ENCODE measurements at regions of chrX and their contacts with region 1.

Region 1: DNA sequence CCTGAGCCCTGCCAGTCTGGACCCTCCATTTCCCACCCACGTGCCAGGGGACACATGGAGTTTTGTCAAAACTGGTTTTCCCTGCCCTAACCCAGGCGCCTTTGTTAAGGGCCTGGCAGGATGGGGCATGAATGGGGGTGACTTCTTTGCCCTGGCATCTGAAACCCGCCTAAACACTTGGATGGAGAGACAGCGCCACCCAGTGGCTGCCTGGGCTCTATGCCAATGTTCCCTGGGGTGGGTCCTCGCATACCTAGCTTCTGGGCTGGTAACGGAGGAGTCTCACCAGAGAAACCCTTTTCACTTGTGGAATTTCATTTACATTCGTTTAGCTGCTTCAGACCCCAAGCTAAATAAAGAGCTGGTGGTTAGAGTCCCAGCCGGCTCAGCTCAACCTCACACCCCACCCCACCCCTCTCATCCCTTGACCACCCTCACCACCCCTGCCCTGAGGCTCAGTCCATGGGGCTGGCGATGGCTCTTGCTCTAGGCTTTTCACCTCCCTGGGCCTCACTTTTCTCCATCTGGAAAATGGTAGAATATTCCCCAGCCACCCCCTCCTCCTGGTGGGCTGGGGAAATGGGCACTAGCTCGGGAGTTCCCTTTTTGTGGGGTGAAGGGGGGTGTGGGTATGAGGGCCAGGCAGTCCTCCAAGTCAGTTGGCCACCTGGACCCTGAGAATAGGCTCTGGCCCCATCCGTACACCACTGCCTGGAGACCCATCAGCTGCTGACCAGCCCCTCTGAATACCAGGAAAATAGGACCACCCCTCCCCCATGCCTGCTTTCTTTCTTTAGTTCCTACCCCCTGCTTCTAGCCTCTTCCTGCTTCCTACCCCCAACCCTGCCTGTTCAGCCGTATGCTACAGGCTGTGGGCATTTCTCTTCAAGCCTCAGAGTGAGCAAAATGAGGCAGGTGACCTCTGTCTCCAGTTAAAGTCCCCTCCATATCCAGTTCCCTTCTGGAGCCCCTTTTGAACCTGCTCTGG is 57.1 kb upstream of the PJA1 start:
- DNase-seq: peak; percentile 90
- H3K4me3 ChIP-seq: no peak overlapping the region
- H3K27ac ChIP-seq: peak overlapping the region; percentile 22
- H3K4me1 ChIP-seq: peaks cover 18% of the 10 kb centered on the region
- H3K27me3 ChIP-seq: no peaks in the 10 kb centered on the region
- CTCF ChIP-seq: peak; percentile 87

Region 2: GRCh38 chrX:68249401-68249831 is 973.0 kb before region 1 on chrX:
- CTCF ChIA-PET with region 1: no interaction called
- POLR2A ChIA-PET with region 1: no interaction called
- intact Hi-C with region 1: no loop called
- DNase-seq: no peak
- H3K4me3 ChIP-seq: no peak overlapping the region
- H3K27ac ChIP-seq: no peak overlapping the region
- H3K4me1 ChIP-seq: no peaks in the 10 kb centered on the region
- H3K27me3 ChIP-seq: no peaks in the 10 kb centered on the region
- CTCF ChIP-seq: no peak

Region 3: GRCh38 chrX:68732906-68733493 is 489.4 kb before region 1 on chrX:
- CTCF ChIA-PET with region 1: no interaction called
- POLR2A ChIA-PET with region 1: no interaction called
- intact Hi-C with region 1: loop called (anchors 5 kb)
- DNase-seq: peak; percentile 79
- H3K4me3 ChIP-seq: no peak overlapping the region
- H3K27ac ChIP-seq: no peak overlapping the region
- H3K4me1 ChIP-seq: no peaks in the 10 kb centered on the region
- H3K27me3 ChIP-seq: no peaks in the 10 kb centered on the region
- CTCF ChIP-seq: peak; percentile 79

Region 4: GRCh38 chrX:68828740-68829552 is 393.5 kb before region 1 on chrX and contains the start of gene EFNB1:
- CTCF ChIA-PET with region 1: interaction called, 28 read pairs
- POLR2A ChIA-PET with region 1: no interaction called
- intact Hi-C with region 1: loop called (anchors 1 kb)
- DNase-seq: peak; percentile 95
- H3K4me3 ChIP-seq: peak within 1 kb of the TSS; percentile 82
- H3K27ac ChIP-seq: peak within 1 kb of the TSS; percentile 84
- H3K4me1 ChIP-seq: no peaks in the 10 kb centered on the region
- H3K27me3 ChIP-seq: no peaks in the 10 kb centered on the region
- CTCF ChIP-seq: no peak
- total RNA-seq, gene EFNB1: 76.8 and 78.1 TPM in 2 replicates

Region 5: GRCh38 chrX:69093960-69094871 is 128.2 kb before region 1 on chrX:
- CTCF ChIA-PET with region 1: interaction called, 4 read pairs
- POLR2A ChIA-PET with region 1: no interaction called
- intact Hi-C with region 1: loop called (anchors 5 kb)
- DNase-seq: peak; percentile 81
- H3K4me3 ChIP-seq: no peak overlapping the region
- H3K27ac ChIP-seq: no peak overlapping the region
- H3K4me1 ChIP-seq: no peaks in the 10 kb centered on the region
- H3K27me3 ChIP-seq: no peaks in the 10 kb centered on the region
- CTCF ChIP-seq: peak; percentile 79

Measured in A673 (cell line).